MCF 10A (cell line): ENCODE measurements at regions of chr3 and their contacts with region 1.

Region 1: GRCh38 chr3:120348981-120349818 is at the start of gene LRRC58:
- DNase-seq: peak; percentile 95
- H3K4me3 Mint-ChIP-seq: peak within 1 kb of the TSS; percentile 77
- H3K27ac Mint-ChIP-seq: peak within 1 kb of the TSS; percentile 83
- H3K4me1 Mint-ChIP-seq: peaks cover 34% of the 10 kb centered on the region
- H3K27me3 Mint-ChIP-seq: no peaks in the 10 kb centered on the region
- CTCF ChIP-seq: peak; percentile 8
- total RNA-seq, gene LRRC58: 25.8 and 28.8 TPM in 2 replicates

Region 2: DNA sequence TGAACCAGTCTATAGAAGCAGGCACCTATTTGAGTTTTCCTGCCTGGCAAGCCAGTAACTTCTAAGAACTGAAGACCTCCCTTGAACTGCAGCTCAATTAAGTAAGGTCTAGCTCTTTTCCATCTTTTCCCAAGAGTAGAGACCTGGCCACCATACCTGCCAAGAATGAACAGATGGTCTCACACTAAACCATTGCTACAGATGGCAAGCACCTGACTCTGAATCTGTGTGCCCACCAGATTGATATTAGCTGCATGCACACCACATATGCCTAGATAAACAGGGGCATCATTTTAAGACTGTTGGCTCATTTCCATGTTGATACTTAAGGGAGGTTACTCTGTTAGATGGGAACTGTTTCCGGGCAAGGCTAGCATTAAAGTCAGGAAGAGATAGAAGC is 220.1 kb before region 1 on chr3:
- CTCF ChIA-PET with region 1: no interaction called
- POLR2A ChIA-PET with region 1: no interaction called
- intact Hi-C with region 1: no loop called
- DNase-seq: no peak
- H3K4me3 Mint-ChIP-seq: no peak overlapping the region
- H3K27ac Mint-ChIP-seq: no peak overlapping the region
- H3K4me1 Mint-ChIP-seq: no peaks in the 10 kb centered on the region
- H3K27me3 Mint-ChIP-seq: no peaks in the 10 kb centered on the region
- CTCF ChIP-seq: no peak

Region 3: DNA sequence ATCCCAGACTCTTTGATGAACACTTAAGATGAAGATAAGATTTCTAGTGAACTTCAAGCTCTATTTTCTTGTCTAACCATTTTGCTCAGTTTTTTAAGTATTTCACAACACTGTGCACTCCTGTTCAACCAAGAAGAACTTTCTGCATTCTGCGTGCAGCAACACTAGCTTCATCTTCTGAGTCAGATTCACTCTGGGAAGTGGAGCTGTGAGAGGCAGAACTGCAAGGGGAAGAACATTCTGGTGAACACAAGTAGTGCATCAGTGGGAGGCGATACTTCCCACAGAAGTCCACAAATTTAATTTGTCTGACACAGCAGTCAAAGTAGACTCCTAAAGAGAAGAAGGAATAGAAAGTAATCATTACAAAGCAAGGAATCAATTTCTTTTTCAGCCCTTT is 18.1 kb before region 1 on chr3:
- CTCF ChIA-PET with region 1: interaction called, 9 read pairs
- POLR2A ChIA-PET with region 1: interaction called, 22 read pairs
- intact Hi-C with region 1: no loop called
- DNase-seq: no peak
- H3K4me3 Mint-ChIP-seq: no peak overlapping the region
- H3K27ac Mint-ChIP-seq: no peak overlapping the region
- H3K4me1 Mint-ChIP-seq: peaks cover 4% of the 10 kb centered on the region
- H3K27me3 Mint-ChIP-seq: no peaks in the 10 kb centered on the region
- CTCF ChIP-seq: no peak

Region 4: GRCh38 chr3:120473896-120474686 is 124.9 kb after region 1 on chr3:
- CTCF ChIA-PET with region 1: no interaction called
- POLR2A ChIA-PET with region 1: no interaction called
- intact Hi-C with region 1: no loop called
- DNase-seq: no peak
- H3K4me3 Mint-ChIP-seq: no peak overlapping the region
- H3K27ac Mint-ChIP-seq: no peak overlapping the region
- H3K4me1 Mint-ChIP-seq: peaks cover 23% of the 10 kb centered on the region
- H3K27me3 Mint-ChIP-seq: no peaks in the 10 kb centered on the region
- CTCF ChIP-seq: no peak

Region 5: GRCh38 chr3:120596116-120596852 is 247.1 kb after region 1 on chr3 and contains the start of gene NDUFB4:
- CTCF ChIA-PET with region 1: interaction called, 3 read pairs
- POLR2A ChIA-PET with region 1: interaction called, 16 read pairs
- intact Hi-C with region 1: no loop called
- DNase-seq: peak; percentile 99
- H3K4me3 Mint-ChIP-seq: peak within 1 kb of the TSS; percentile 92
- H3K27ac Mint-ChIP-seq: peak within 1 kb of the TSS; percentile 95
- H3K4me1 Mint-ChIP-seq: peaks cover 5% of the 10 kb centered on the region
- H3K27me3 Mint-ChIP-seq: peaks cover 11% of the 10 kb centered on the region
- CTCF ChIP-seq: no peak
- total RNA-seq, gene NDUFB4: 96.1 and 113 TPM in 2 replicates

Region 6: GRCh38 chr3:120742198-120742849 is 393.1 kb after region 1 on chr3 and contains the starts of genes GTF2E1 and RABL3:
- CTCF ChIA-PET with region 1: no interaction called
- POLR2A ChIA-PET with region 1: interaction called, 3 read pairs
- intact Hi-C with region 1: loop called (anchors 2 kb)
- DNase-seq: peak; percentile 99
- H3K4me3 Mint-ChIP-seq: peak within 1 kb of the TSS; percentile 99
- H3K27ac Mint-ChIP-seq: peak within 1 kb of the TSS; percentile 99
- H3K4me1 Mint-ChIP-seq: peaks cover 18% of the 10 kb centered on the region
- H3K27me3 Mint-ChIP-seq: no peaks in the 10 kb centered on the region
- CTCF ChIP-seq: no peak
- total RNA-seq, gene GTF2E1: 18.0 and 21.6 TPM in 2 replicates
- total RNA-seq, gene RABL3: 21.8 and 26.0 TPM in 2 replicates